ENCODE measurements at regions of chr3 and their contacts with region 1.

Region 1: DNA sequence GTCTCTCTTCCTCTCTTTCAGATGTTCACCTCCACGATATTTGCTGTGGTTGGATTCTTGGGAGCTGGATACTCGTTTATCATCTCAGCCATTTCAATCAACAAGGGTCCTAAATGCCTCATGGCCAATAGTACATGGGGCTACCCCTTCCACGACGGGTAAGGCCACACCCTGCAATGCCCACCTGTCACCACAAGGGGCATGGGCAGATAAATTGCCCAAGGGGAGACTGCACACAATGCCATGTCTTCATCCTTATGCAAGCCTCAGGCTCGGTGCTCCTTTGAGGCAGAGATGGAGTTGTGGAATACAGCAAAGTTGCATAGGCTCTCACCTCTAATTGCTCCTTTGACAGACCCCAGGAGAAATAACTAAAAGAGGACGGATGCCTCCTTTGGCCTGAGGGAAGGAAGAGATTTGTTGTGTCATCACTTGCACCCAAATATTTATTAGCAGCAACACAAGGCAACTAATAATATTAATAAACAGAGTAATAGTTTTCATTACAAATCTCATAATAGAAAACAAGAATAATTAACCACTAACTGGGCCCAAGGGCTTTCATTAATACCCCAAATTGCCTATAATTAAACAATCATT is 13.2 kb downstream of the TM4SF4 start:
- DNase-seq: peak in 1 of 2 experiments; percentile 85
- H3K4me3 ChIP-seq: no peak overlapping the region
- H3K27ac ChIP-seq: no peak overlapping the region
- H3K4me1 ChIP-seq: no peaks in the 10 kb centered on the region
- H3K27me3 ChIP-seq: no peaks in the 10 kb centered on the region
- CTCF ChIP-seq: peak; percentile 71 to 95 (median 92)
- EP300 ChIP-seq: no peak
- POLR2A ChIP-seq: no peak
- RAD21 ChIP-seq: peak; percentile 41 to 59

Region 2: DNA sequence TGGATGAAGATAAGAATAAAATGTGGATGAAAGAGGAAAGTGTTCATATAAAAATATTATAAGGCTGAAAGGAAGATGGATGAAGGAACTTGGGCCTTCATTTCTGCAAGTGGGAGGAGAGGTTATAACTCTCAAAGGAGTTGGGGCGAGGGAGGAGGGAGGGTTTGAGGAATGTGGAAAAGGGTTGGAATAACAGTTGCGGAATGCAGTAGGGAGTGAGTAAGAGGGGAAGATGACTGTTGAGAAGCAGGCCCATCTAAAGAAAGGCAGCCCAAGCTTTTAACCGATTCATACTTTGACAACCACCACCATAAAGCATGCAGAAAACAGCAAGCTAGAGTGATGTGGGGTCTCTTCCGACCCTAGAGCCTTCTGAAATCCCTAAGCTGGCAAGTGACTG is 21.5 kb before region 1 on chr3:
- CTCF ChIA-PET with region 1: interaction called, 30 read pairs
- POLR2A ChIA-PET with region 1: no interaction called
- DNase-seq: peak in 1 of 2 experiments; percentile 7
- H3K4me3 ChIP-seq: no peak overlapping the region
- H3K27ac ChIP-seq: no peak overlapping the region
- H3K4me1 ChIP-seq: peaks cover 0 to 4% (median 0%) of the 10 kb centered on the region in 4 experiments; a peak in 3 of 7 replicates
- H3K27me3 ChIP-seq: no peaks in the 10 kb centered on the region
- CTCF ChIP-seq: no peak
- EP300 ChIP-seq: no peak
- POLR2A ChIP-seq: no peak
- RAD21 ChIP-seq: no peak

Region 3: GRCh38 chr3:149473357-149474249 is 14.1 kb before region 1 on chr3:
- CTCF ChIA-PET with region 1: interaction called, 39 read pairs
- POLR2A ChIA-PET with region 1: no interaction called
- DNase-seq: no peak
- H3K4me3 ChIP-seq: no peak overlapping the region
- H3K27ac ChIP-seq: no peak overlapping the region
- H3K4me1 ChIP-seq: peaks cover 0 to 2% (median 0%) of the 10 kb centered on the region in 4 experiments; a peak in 4 of 7 replicates
- H3K27me3 ChIP-seq: no peaks in the 10 kb centered on the region
- CTCF ChIP-seq: no peak
- EP300 ChIP-seq: no peak
- POLR2A ChIP-seq: no peak
- RAD21 ChIP-seq: no peak

Region 4: GRCh38 chr3:149501524-149501923 is 13.8 kb after region 1 on chr3:
- CTCF ChIA-PET with region 1: interaction called, 60 read pairs
- POLR2A ChIA-PET with region 1: no interaction called
- DNase-seq: no peak
- H3K4me3 ChIP-seq: no peak overlapping the region; a peak in 1 of 8 replicates
- H3K27ac ChIP-seq: no peak overlapping the region
- H3K4me1 ChIP-seq: no peaks in the 10 kb centered on the region
- H3K27me3 ChIP-seq: no peaks in the 10 kb centered on the region
- CTCF ChIP-seq: no peak
- EP300 ChIP-seq: no peak
- POLR2A ChIP-seq: no peak
- RAD21 ChIP-seq: no peak

Region 5: GRCh38 chr3:149744151-149744550 is 256.5 kb after region 1 on chr3:
- CTCF ChIA-PET with region 1: no interaction called
- POLR2A ChIA-PET with region 1: no interaction called
- DNase-seq: no peak
- H3K4me3 ChIP-seq: no peak overlapping the region
- H3K27ac ChIP-seq: no peak overlapping the region
- H3K4me1 ChIP-seq: no peaks in the 10 kb centered on the region
- H3K27me3 ChIP-seq: no peaks in the 10 kb centered on the region
- CTCF ChIP-seq: no peak
- EP300 ChIP-seq: no peak
- POLR2A ChIP-seq: no peak
- RAD21 ChIP-seq: no peak

Measured in H1 (cell line).